ENCODE measurements at regions of chr22 and their contacts with region 1.

Region 1: DNA sequence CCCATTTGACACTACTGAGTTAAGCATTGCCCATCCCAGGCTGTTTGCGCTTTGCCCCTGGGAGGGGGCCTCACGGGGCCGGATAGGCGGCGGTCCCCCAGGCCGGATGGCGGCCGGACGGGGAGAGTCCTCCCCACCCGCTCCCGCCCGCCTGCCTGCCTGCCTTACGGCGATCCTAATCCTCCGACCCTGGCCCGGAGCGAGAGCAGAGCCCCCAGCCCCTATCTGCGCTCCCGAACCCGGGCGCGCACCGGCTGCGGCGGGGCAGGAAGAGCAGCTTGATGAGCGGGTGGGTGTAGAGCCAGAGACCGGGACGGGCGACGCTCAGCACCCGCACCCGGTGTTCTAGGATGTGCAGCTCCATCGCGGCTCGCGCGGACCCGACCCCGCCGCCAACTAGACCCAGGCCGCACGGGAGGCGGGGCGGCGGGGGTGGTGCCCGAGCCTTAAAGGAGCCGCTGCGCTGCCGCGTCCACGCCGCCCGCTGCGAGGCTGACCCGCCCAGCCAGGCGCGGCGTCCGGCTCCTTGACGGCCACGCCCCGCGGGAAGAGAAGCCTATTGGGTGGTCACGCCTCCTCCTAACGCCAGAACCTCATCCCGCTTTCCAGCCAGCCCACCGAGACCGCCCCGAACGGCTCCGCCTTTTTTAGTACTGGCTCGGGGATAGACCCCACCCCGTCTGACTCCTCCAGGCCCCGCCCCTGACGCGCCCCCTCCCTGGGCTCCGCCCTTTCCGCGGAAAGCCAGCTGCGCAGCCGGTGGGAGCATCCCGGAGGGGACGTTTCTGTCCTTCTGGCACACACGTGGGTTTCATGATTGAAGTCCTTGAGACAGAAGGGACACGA is at the start of gene CASTOR1:
- DNase-seq: no peak
- ATAC-seq: peak; percentile 83
- H3K4me3 ChIP-seq: peak within 1 kb of the TSS; percentile 74
- H3K27ac ChIP-seq: peak within 1 kb of the TSS; percentile 55
- H3K4me1 ChIP-seq: peaks cover 25% of the 10 kb centered on the region
- H3K27me3 ChIP-seq: no peaks in the 10 kb centered on the region
- CTCF ChIP-seq: no peak
- EP300 ChIP-seq: no peak
- POLR2A ChIP-seq: no peak; the same call in none of the 2 replicates
- RAD21 ChIP-seq: no peak
- polyA plus RNA-seq, gene CASTOR1: 0.31 to 1.2 TPM

Region 2: DNA sequence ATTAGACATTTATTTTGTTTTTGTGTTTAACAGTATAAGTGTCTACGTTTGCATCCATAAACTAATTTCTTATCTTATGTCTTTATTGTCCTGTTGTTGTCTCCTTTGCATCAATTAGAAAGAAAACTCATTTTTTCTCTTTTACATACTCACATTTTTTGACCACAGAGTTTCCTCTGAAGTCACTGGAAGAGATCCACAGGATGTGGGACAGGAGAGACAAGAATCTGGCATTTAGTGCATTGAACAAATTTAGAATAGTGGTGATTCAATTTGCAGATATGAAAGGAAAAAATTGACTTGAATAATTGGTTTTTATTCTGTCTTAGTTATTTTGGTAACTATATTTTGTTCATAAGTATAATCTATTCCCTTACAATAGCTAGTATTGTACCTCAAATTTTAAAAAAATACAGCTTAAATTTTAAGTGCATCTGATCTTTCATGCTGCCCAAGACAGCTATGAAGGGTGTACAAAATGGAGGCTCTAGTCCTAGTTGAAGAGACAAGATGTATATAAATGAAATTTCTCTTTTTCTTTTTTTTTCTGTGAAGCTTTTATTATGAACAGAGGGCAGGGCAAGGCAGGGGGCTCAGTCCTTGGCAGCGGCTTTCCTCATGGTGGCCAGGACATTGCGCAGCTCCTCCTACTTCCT is 184.7 kb before region 1 on chr22:
- CTCF ChIA-PET with region 1: interaction called, 74 read pairs
- POLR2A ChIA-PET with region 1: no interaction called
- RAD21 ChIA-PET with region 1: interaction called, 36 read pairs
- SMC1A ChIA-PET with region 1: interaction called, 41 read pairs
- in situ Hi-C with region 1: no loop called
- intact Hi-C with region 1: loop called (anchors 1 kb)
- DNase-seq: no peak
- ATAC-seq: no peak
- H3K4me3 ChIP-seq: no peak overlapping the region
- H3K27ac ChIP-seq: no peak overlapping the region
- H3K4me1 ChIP-seq: no peaks in the 10 kb centered on the region
- H3K27me3 ChIP-seq: no peaks in the 10 kb centered on the region
- CTCF ChIP-seq: no peak
- EP300 ChIP-seq: no peak
- POLR2A ChIP-seq: no peak
- RAD21 ChIP-seq: no peak

Region 3: DNA sequence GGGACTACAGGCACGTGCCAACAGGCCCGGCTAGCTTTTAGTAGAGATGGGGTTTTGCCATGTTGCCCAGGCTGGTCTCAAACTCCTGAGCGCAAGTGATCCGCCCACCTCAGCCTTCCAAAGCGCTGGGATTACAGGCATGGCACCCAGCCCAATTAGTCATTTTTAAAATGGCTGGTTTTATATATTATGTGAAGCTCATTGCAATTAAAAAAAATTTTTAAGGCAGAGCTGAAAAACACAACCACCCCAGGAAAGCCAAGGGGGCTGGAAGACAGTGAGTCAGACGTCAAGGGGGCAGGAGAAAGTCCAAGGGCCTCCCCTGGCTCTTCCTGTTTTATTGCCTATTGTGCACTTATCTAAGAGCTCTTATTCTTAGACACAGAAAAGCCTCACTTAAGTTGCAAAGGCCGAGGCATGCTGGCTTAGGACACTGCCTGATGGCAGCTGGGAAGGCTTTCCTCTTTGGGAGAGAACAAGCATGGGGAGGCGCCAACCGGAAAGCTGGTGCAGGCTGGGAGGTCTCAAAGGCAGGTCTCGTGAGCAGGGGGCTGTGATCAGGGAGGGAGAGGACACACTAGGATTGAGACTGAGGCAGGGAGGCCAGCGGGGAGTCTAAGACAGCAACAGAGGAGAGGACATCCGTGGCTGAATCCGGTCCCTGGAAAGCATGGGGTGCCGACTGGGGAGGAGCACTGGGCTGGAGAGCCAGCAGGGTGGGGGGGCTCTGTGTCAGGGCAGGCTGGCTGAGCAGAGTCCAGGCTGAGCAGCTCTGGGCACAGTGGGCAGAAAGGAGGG is 11.6 kb before region 1 on chr22:
- CTCF ChIA-PET with region 1: interaction called, 12 read pairs
- POLR2A ChIA-PET with region 1: interaction called, 3 read pairs
- RAD21 ChIA-PET with region 1: interaction called, 3 read pairs
- SMC1A ChIA-PET with region 1: interaction called, 3 read pairs
- in situ Hi-C with region 1: no loop called
- intact Hi-C with region 1: no loop called
- DNase-seq: no peak
- ATAC-seq: no peak
- H3K4me3 ChIP-seq: no peak overlapping the region
- H3K27ac ChIP-seq: no peak overlapping the region
- H3K4me1 ChIP-seq: no peaks in the 10 kb centered on the region
- H3K27me3 ChIP-seq: no peaks in the 10 kb centered on the region; a peak in 1 of 4 replicates
- CTCF ChIP-seq: no peak
- EP300 ChIP-seq: no peak
- POLR2A ChIP-seq: no peak
- RAD21 ChIP-seq: no peak

Region 4: GRCh38 chr22:30340911-30341685 is 51.7 kb after region 1 on chr22:
- CTCF ChIA-PET with region 1: interaction called, 44 read pairs
- POLR2A ChIA-PET with region 1: no interaction called
- RAD21 ChIA-PET with region 1: interaction called, 3 read pairs
- SMC1A ChIA-PET with region 1: interaction called, 8 read pairs
- in situ Hi-C with region 1: no loop called
- intact Hi-C with region 1: no loop called
- DNase-seq: no peak
- ATAC-seq: no peak
- H3K4me3 ChIP-seq: no peak overlapping the region
- H3K27ac ChIP-seq: no peak overlapping the region
- H3K4me1 ChIP-seq: no peaks in the 10 kb centered on the region
- H3K27me3 ChIP-seq: no peaks in the 10 kb centered on the region
- CTCF ChIP-seq: no peak
- EP300 ChIP-seq: no peak
- POLR2A ChIP-seq: 0 out of 2 replicates have a peak, but pooled peaks have one; percentile 15
- RAD21 ChIP-seq: no peak

Region 5: DNA sequence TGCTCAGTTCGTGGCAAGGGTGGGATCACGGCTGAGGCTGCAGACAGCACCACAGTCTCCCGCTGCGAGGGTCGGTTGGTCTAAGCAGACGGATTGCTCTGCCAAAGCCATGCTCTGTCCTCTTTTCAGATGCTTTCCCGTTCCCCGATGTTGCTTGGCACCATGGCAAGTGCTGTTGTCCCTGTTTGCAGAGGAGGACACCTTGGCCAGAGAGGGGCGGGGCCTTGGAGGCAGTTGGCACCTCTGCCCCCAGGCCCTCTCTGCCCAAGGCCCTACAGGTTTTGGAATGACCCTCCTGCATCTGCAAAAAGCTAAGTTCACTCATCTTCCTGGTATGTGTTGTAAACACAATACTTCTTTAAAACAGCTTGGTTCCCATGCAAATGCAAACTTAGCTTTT is 79.1 kb after region 1 on chr22:
- CTCF ChIA-PET with region 1: interaction called, 24 read pairs
- POLR2A ChIA-PET with region 1: no interaction called
- RAD21 ChIA-PET with region 1: interaction called, 4 read pairs
- SMC1A ChIA-PET with region 1: interaction called, 4 read pairs
- in situ Hi-C with region 1: no loop called
- intact Hi-C with region 1: no loop called
- DNase-seq: no peak
- ATAC-seq: no peak
- H3K4me3 ChIP-seq: no peak overlapping the region
- H3K27ac ChIP-seq: no peak overlapping the region
- H3K4me1 ChIP-seq: no peaks in the 10 kb centered on the region
- H3K27me3 ChIP-seq: no peaks in the 10 kb centered on the region
- CTCF ChIP-seq: no peak
- EP300 ChIP-seq: no peak
- POLR2A ChIP-seq: no peak
- RAD21 ChIP-seq: no peak

Region 6: GRCh38 chr22:30396871-30397655 is 107.7 kb after region 1 on chr22 and contains the start of gene SEC14L2:
- CTCF ChIA-PET with region 1: interaction called, 436 read pairs
- POLR2A ChIA-PET with region 1: interaction called, 24 read pairs
- RAD21 ChIA-PET with region 1: interaction called, 277 read pairs
- SMC1A ChIA-PET with region 1: interaction called, 201 read pairs
- in situ Hi-C with region 1: no loop called
- intact Hi-C with region 1: no loop called
- DNase-seq: no peak
- ATAC-seq: peak; percentile 59
- H3K4me3 ChIP-seq: peak within 1 kb of the TSS; percentile 32; the same call in 1 of the 2 replicates
- H3K27ac ChIP-seq: no peak within 1 kb of the TSS
- H3K4me1 ChIP-seq: peaks cover 18% of the 10 kb centered on the region
- H3K27me3 ChIP-seq: peaks cover 4 to 9% of the 10 kb centered on the region in 2 experiments
- CTCF ChIP-seq: no peak
- EP300 ChIP-seq: no peak
- POLR2A ChIP-seq: peak; percentile 58
- RAD21 ChIP-seq: no peak
- polyA plus RNA-seq, gene SEC14L2: 0.08 to 0.11 TPM

Region 7: GRCh38 chr22:30606455-30607299 is 317.3 kb after region 1 on chr22 and contains the start of gene TCN2:
- CTCF ChIA-PET with region 1: interaction called, 12 read pairs
- POLR2A ChIA-PET with region 1: no interaction called
- RAD21 ChIA-PET with region 1: no interaction called
- SMC1A ChIA-PET with region 1: no interaction called
- in situ Hi-C with region 1: no loop called
- intact Hi-C with region 1: no loop called
- DNase-seq: no peak
- ATAC-seq: peak; percentile 79
- H3K4me3 ChIP-seq: peak within 1 kb of the TSS; percentile 66
- H3K27ac ChIP-seq: peak within 1 kb of the TSS; percentile 54
- H3K4me1 ChIP-seq: peaks cover 51% of the 10 kb centered on the region
- H3K27me3 ChIP-seq: no peaks in the 10 kb centered on the region
- CTCF ChIP-seq: 0 out of 6 replicates have a peak, but pooled peaks of 1 of the 3 experiments have one; percentile 12
- EP300 ChIP-seq: no peak
- POLR2A ChIP-seq: peak; percentile 62; the same call in 1 of the 2 replicates
- RAD21 ChIP-seq: no peak
- polyA plus RNA-seq, gene TCN2: 15.9 to 21.8 TPM